Activated CD8-positive, alpha-beta T cell treated with anti-CD3 and anti-CD28 coated beads for 36 hours (primary cell): ENCODE measurements at regions of chr12 and their contacts with region 1.

Region 1: DNA sequence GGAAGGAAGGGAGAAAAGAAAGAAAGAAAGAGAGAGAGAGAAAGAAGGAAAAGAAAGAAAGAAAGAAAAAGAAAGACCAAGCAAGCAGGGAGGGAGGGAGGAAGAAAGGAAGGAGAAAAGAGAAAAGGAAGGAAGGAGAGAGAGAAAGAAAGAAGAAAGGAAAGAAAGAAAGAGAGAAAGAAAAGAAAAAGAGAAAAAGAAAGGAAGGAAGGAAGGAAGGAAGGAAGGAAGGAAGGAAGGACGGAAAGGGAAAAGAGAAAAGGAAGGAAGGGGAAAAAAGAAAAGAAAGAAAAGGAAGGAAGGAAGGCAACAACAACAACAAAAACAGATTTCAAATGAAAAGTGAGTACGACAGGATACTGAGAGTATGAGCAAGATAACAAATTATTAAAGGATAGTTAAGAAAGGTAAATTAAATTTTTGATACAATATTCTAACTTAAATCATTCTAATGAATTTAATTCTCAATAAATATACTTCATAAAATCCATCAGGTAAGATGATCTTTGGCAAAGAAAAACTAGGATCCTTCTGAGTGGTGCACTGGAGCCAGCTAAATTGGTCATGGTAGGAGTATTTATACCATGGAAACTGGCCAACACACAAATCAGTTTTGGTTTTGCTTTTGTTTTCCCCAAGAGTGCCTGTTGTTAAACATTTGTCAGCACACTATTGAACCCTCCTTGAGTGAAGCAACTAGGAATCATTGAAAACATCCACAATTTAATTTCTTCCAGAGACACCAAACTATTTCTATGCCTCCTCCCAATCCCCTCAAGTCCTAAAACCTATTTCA is 56.1 kb upstream of the DYRK2 start:
- DNase-seq: no peak
- ATAC-seq: peak; percentile 64
- H3K4me3 Mint-ChIP-seq: no peak overlapping the region
- H3K27ac Mint-ChIP-seq: peak overlapping the region; percentile 68
- H3K4me1 Mint-ChIP-seq: peaks cover 51% of the 10 kb centered on the region
- H3K27me3 Mint-ChIP-seq: no peaks in the 10 kb centered on the region
- CTCF ChIP-seq: no peak

Region 2: GRCh38 chr12:67468544-67469245 is 123.7 kb before region 1 on chr12:
- CTCF ChIA-PET with region 1: no interaction called
- POLR2A ChIA-PET with region 1: no interaction called
- intact Hi-C with region 1: no loop called
- DNase-seq: no peak
- ATAC-seq: no peak
- H3K4me3 Mint-ChIP-seq: no peak overlapping the region
- H3K27ac Mint-ChIP-seq: no peak overlapping the region
- H3K4me1 Mint-ChIP-seq: peaks cover 8% of the 10 kb centered on the region
- H3K27me3 Mint-ChIP-seq: no peaks in the 10 kb centered on the region
- CTCF ChIP-seq: no peak

Region 3: DNA sequence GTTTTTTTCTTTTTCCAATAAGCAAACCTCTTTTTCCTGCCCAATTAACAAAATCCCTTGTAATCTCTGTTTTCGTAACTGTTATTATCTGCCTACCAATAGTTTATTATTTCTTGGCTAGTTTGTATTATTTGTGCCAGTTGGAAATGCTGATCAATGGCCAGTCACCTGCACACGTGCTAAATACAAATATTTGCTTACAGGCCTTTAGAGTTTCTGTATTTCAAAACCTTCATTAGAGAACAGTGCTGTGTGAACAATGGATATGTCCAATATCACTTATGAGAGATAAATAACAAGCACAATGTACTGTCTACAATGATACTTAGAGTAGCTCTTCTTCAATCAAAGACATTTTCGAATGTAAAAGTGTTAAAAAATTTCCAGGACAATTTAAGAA is 45.3 kb after region 1 on chr12:
- CTCF ChIA-PET with region 1: no interaction called
- POLR2A ChIA-PET with region 1: interaction called, 3 read pairs
- intact Hi-C with region 1: loop called (anchors 5 kb)
- DNase-seq: no peak
- ATAC-seq: no peak
- H3K4me3 Mint-ChIP-seq: no peak overlapping the region
- H3K27ac Mint-ChIP-seq: no peak overlapping the region
- H3K4me1 Mint-ChIP-seq: peaks cover 32% of the 10 kb centered on the region
- H3K27me3 Mint-ChIP-seq: no peaks in the 10 kb centered on the region
- CTCF ChIP-seq: no peak